Activated naive CD4-positive, alpha-beta T cell treated with anti-CD3 and anti-CD28 coated beads for 36 hours (primary cell): ENCODE measurements at regions of chr19 and their contacts with region 1.

Region 1: GRCh38 chr19:7562646-7563393 is 27.3 kb downstream of the PNPLA6 start:
- DNase-seq: no peak
- H3K4me3 Mint-ChIP-seq: no peak overlapping the region
- H3K27ac Mint-ChIP-seq: no peak overlapping the region
- H3K4me1 Mint-ChIP-seq: no peaks in the 10 kb centered on the region
- H3K27me3 Mint-ChIP-seq: no peaks in the 10 kb centered on the region

Region 2: DNA sequence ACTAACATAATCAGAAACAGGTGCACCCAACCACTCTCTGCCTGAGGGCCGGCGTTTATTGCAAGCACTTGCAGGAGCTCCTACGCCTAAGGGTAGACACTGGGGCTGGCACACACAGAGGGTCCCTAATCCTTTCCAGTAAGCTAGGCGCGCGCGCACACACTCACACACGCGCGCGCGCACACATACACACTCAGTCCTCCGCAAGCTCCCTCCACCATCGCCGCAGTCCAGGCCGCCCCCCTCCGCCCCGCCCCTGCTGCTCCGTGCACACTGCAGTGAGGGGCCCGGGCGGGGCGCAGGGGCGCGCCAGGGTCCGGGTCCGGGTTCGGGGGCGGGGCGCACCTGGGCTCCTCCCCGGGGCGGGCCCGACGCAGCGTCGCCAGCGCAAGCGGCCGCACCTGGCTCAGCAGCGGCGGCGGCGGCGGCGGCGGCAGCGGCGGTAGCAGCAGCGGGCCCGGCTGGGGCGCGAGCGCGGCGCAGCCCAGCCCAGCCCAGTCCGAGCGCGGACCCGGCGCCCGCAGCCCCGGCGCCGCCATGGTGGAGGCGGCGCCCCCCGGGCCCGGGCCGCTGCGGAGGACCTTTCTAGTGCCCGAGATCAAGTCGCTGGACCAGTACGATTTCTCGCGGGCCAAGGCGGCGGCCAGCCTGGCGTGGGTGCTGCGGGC is 32.8 kb after region 1 on chr19 and contains the start of gene CAMSAP3:
- CTCF ChIA-PET with region 1: interaction called, 16 read pairs
- intact Hi-C with region 1: no loop called
- DNase-seq: peak; percentile 28
- H3K4me3 Mint-ChIP-seq: peak within 1 kb of the TSS; percentile 59
- H3K27ac Mint-ChIP-seq: no peak within 1 kb of the TSS
- H3K4me1 Mint-ChIP-seq: peaks cover 4% of the 10 kb centered on the region
- H3K27me3 Mint-ChIP-seq: peaks cover 22% of the 10 kb centered on the region
- total RNA-seq, gene CAMSAP3: 0.24 to 0.30 TPM

Region 3: DNA sequence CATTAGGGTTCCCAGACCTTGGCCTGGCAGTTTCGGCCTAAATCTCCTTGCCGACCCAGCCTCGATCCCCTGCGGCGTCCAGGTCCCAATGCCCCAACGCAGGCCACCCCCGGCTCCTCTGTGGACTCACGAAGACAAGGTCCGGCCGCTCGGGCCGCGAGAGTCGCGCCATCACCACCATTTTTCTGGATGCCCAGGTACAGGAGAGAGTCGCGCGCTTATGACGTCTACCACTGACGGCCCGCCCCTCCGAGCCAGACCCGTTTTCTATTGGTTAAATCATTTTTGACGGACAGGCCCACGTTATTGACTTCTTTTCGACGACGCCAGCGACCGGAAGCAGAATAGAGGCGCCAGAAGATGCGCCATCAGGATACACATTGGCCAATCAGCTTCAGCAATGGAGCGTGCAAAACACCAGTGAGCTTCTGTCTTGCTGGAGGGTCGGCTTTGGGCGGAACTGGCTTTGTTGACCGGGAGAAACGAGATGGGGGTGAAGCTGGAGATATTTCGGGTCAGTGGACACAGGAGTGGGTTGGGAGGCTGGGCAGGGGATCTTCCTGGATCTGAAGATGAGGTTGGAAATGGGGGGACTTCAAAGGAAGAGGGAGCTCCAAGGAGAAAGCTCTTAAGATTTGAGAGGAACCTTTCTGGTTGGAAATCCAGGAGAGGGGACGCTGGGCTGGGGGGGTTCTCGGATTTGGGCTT is 66.7 kb after region 1 on chr19 and contains the starts of genes PET100 and XAB2:
- CTCF ChIA-PET with region 1: interaction called, 6 read pairs
- intact Hi-C with region 1: loop called (anchors 2 kb)
- DNase-seq: peak; percentile 97
- H3K4me3 Mint-ChIP-seq: peak within 1 kb of the TSS; percentile 98
- H3K27ac Mint-ChIP-seq: peak within 1 kb of the TSS; percentile 97
- H3K4me1 Mint-ChIP-seq: peaks cover 42% of the 10 kb centered on the region
- H3K27me3 Mint-ChIP-seq: no peaks in the 10 kb centered on the region
- total RNA-seq, gene PET100: 93.9 to 96.5 TPM
- total RNA-seq, gene XAB2: 60.0 to 60.4 TPM

Region 4: DNA sequence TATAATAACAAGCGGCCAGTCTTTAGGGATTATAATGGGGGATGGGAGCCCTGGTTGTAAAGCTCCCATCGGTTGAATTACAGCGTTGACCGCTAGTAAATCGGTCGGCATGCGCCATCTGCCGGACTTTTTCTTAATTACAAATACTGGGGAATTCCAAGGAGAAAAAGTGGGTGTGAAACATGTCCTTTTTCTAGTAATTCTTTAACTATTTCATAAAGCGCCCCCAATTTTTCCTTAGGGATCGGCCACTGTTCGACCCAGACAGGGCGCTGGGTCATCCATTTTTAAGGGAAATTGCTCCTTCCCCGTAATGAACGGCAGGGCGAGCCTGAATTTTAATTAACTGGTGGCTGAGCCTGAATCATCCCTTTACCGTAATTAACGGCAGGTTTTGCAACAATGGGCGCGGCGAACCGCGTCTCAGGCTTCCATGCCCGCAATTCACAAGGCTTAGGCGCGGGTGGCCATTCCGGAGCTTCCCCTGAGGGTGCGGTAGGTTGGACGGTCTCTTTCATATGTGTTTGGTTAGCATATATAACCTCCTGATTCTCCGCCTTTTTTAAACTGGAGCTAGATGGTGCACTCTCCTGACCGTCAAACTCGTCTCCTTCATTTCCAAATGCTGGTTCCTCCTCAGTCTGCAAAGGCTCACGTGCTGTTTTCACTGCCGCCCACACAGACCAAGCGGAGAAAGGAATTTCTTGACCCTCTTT is 237.0 kb after region 1 on chr19:
- CTCF ChIA-PET with region 1: interaction called, 36 read pairs
- intact Hi-C with region 1: loop called (anchors 1 kb)
- DNase-seq: peak; percentile 76
- H3K4me3 Mint-ChIP-seq: peak overlapping the region; percentile 60
- H3K27ac Mint-ChIP-seq: no peak overlapping the region
- H3K4me1 Mint-ChIP-seq: peaks cover 5% of the 10 kb centered on the region
- H3K27me3 Mint-ChIP-seq: peaks cover 14% of the 10 kb centered on the region